ENCODE measurements at regions of chr9 and their contacts with region 1.

Region 1: DNA sequence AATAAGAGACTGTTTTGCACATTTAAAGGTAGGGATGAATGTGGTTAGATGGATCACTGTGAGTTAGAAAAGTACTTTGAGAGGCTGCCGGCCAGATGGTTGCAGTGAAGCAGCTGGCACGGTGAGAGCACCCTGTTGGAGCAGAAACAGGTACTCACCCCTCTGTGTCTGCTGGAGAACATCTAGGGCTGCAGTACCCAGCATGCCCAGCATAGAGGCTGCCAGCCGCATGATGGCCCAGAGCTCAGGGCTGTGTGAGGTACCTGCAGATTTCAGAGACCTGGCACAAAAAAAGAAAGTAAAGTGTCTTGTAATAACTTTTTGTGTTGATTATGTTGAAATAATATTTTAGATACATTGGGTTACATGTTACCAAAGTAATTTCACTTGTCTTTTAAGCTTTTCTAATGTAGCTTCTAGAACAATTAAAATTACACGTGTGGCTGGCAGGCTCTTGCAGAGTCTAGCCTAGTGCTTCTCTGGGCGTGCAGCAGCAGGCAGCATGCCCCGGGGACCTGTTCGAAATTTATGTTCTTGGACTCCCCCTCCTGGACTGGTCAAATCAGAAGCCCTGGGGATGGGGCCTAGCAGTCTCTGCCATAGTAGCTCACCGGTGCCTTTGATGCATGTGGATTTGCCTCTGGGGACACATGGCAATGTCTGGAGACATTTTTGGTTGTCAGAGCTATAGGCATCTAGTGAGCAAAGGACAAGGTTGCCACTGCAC is 11.1 kb downstream of the WDR5 start:
- DNase-seq: no peak
- ATAC-seq: 0 out of 2 replicates have a peak, but pooled peaks have one; percentile 56
- H3K4me3 ChIP-seq: no peak overlapping the region
- H3K27ac ChIP-seq: no peak overlapping the region
- H3K4me1 ChIP-seq: no peaks in the 10 kb centered on the region
- H3K27me3 ChIP-seq: no peaks in the 10 kb centered on the region
- CTCF ChIP-seq: no peak

Region 2: GRCh38 chr9:133726401-133727276 is 420.3 kb before region 1 on chr9:
- CTCF ChIA-PET with region 1: interaction called, 10 read pairs
- POLR2A ChIA-PET with region 1: no interaction called
- in situ Hi-C with region 1: no loop called
- intact Hi-C with region 1: no loop called
- DNase-seq: no peak
- ATAC-seq: peak; percentile 88
- H3K4me3 ChIP-seq: no peak overlapping the region
- H3K27ac ChIP-seq: no peak overlapping the region
- H3K4me1 ChIP-seq: peaks cover 2% of the 10 kb centered on the region; the same call in 1 of the 2 replicates
- H3K27me3 ChIP-seq: peaks cover 4% of the 10 kb centered on the region
- CTCF ChIP-seq: peak; percentile 63

Region 3: GRCh38 chr9:134065601-134066419 is 81.1 kb before region 1 on chr9:
- CTCF ChIA-PET with region 1: no interaction called
- POLR2A ChIA-PET with region 1: no interaction called
- in situ Hi-C with region 1: no loop called
- intact Hi-C with region 1: no loop called
- DNase-seq: no peak
- ATAC-seq: no peak
- H3K4me3 ChIP-seq: peak overlapping the region; percentile 59 to 74
- H3K27ac ChIP-seq: peak overlapping the region; percentile 75
- H3K4me1 ChIP-seq: no peaks in the 10 kb centered on the region; the same call in 1 of the 2 replicates
- H3K27me3 ChIP-seq: no peaks in the 10 kb centered on the region
- CTCF ChIP-seq: no peak

Region 4: GRCh38 chr9:134088063-134088725 is 58.7 kb before region 1 on chr9:
- CTCF ChIA-PET with region 1: no interaction called
- POLR2A ChIA-PET with region 1: no interaction called
- in situ Hi-C with region 1: no loop called
- intact Hi-C with region 1: no loop called
- DNase-seq: no peak
- ATAC-seq: no peak
- H3K4me3 ChIP-seq: no peak overlapping the region
- H3K27ac ChIP-seq: no peak overlapping the region
- H3K4me1 ChIP-seq: no peaks in the 10 kb centered on the region
- H3K27me3 ChIP-seq: 0 out of 2 replicates have a peak, but pooled peaks cover under 1% of the 10 kb centered on the region
- CTCF ChIP-seq: no peak

Region 5: GRCh38 chr9:134402182-134402581 is 255.2 kb after region 1 on chr9:
- CTCF ChIA-PET with region 1: interaction called, 13 read pairs
- POLR2A ChIA-PET with region 1: no interaction called
- in situ Hi-C with region 1: no loop called
- intact Hi-C with region 1: no loop called
- DNase-seq: no peak
- ATAC-seq: no peak
- H3K4me3 ChIP-seq: no peak overlapping the region
- H3K27ac ChIP-seq: no peak overlapping the region
- H3K4me1 ChIP-seq: peaks cover 11% of the 10 kb centered on the region
- H3K27me3 ChIP-seq: no peaks in the 10 kb centered on the region
- CTCF ChIP-seq: no peak

Measured in Panc1 (cell line).